Activated CD8-positive, alpha-beta T cell treated with anti-CD3 and anti-CD28 coated beads, Interleukin-2, amount 10 ng/mL, durations not matched to agents 7 days and 5 days (primary cell): ENCODE measurements at regions of chr19 and their contacts with region 1.

Region 1: GRCh38 chr19:4456843-4457653 is 546 bp downstream of the UBXN6 start:
- DNase-seq: peak; percentile 44
- ATAC-seq: peak; percentile 40
- H3K4me3 Mint-ChIP-seq: peak overlapping the region; percentile 85
- H3K27ac Mint-ChIP-seq: peak overlapping the region; percentile 84
- H3K4me1 Mint-ChIP-seq: peaks cover 19% of the 10 kb centered on the region
- H3K27me3 Mint-ChIP-seq: no peaks in the 10 kb centered on the region

Region 2: DNA sequence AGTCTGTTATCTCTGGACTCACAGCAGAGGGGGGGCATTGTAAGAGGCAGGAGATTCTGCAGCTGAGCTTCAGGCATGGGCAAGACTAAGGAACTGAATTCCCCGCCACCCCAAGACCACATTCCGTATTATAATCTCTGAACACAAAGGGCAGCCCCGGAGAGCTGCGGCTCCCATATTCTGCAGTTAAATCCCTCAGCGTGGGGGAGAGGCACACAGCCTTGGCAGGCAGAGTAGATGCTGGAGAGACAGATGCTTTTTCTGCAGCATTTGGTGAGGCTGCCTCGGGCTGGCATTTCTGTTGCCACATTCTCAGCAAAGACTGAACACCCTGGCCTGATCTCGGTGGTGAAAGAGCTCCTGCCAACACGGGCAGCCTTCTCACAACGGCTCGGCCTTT is 41.7 kb before region 1 on chr19:
- CTCF ChIA-PET with region 1: no interaction called
- POLR2A ChIA-PET with region 1: no interaction called
- DNase-seq: no peak
- ATAC-seq: no peak
- H3K4me3 Mint-ChIP-seq: no peak overlapping the region
- H3K27ac Mint-ChIP-seq: no peak overlapping the region
- H3K4me1 Mint-ChIP-seq: peaks cover 3% of the 10 kb centered on the region
- H3K27me3 Mint-ChIP-seq: no peaks in the 10 kb centered on the region

Region 3: DNA sequence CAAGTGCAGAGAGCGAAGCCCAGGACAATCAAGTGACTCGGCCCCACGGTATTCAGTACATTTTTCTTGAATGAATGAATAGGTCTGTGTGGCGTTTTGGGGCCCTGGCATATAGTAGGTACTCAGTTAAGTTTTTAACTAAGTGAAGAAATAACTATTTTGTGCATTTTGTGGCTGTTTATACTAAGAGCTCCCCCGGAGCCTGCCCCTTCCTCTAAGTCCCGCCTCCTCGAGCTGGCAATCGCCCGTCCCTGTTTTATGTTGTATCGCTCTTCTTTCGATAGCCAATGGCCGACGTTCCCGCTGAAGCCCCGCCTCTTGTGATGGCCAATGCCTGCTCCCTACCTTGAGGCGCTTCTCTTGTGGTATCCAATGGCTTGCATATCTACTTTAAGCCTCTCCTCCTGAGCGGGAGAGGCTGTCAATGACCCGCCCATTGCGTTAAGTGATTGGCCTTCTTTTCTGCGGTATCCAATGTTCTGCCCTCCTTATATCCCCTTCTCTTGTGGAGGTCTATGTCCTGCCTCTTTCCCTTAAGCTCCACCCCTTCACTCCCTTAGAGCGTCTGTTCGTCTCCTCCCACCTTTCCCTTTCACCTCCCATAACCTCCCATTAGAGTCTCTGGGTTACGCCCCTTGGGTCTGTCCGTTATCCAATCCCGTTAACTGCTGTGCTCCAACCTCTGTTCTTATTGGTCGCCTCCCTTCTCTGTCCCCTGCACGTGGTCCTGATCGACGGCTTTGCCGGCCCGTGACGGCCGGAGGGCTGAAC is 14.5 kb after region 1 on chr19:
- CTCF ChIA-PET with region 1: interaction called, 4 read pairs
- POLR2A ChIA-PET with region 1: interaction called, 15 read pairs
- DNase-seq: peak; percentile 99
- ATAC-seq: peak; percentile 93
- H3K4me3 Mint-ChIP-seq: no peak overlapping the region
- H3K27ac Mint-ChIP-seq: no peak overlapping the region
- H3K4me1 Mint-ChIP-seq: peaks cover 29% of the 10 kb centered on the region
- H3K27me3 Mint-ChIP-seq: no peaks in the 10 kb centered on the region

Region 4: GRCh38 chr19:4510435-4511194 is 53.6 kb after region 1 on chr19:
- CTCF ChIA-PET with region 1: no interaction called
- POLR2A ChIA-PET with region 1: no interaction called
- DNase-seq: no peak
- ATAC-seq: no peak
- H3K4me3 Mint-ChIP-seq: no peak overlapping the region
- H3K27ac Mint-ChIP-seq: no peak overlapping the region
- H3K4me1 Mint-ChIP-seq: peaks cover 9% of the 10 kb centered on the region
- H3K27me3 Mint-ChIP-seq: no peaks in the 10 kb centered on the region

Region 5: DNA sequence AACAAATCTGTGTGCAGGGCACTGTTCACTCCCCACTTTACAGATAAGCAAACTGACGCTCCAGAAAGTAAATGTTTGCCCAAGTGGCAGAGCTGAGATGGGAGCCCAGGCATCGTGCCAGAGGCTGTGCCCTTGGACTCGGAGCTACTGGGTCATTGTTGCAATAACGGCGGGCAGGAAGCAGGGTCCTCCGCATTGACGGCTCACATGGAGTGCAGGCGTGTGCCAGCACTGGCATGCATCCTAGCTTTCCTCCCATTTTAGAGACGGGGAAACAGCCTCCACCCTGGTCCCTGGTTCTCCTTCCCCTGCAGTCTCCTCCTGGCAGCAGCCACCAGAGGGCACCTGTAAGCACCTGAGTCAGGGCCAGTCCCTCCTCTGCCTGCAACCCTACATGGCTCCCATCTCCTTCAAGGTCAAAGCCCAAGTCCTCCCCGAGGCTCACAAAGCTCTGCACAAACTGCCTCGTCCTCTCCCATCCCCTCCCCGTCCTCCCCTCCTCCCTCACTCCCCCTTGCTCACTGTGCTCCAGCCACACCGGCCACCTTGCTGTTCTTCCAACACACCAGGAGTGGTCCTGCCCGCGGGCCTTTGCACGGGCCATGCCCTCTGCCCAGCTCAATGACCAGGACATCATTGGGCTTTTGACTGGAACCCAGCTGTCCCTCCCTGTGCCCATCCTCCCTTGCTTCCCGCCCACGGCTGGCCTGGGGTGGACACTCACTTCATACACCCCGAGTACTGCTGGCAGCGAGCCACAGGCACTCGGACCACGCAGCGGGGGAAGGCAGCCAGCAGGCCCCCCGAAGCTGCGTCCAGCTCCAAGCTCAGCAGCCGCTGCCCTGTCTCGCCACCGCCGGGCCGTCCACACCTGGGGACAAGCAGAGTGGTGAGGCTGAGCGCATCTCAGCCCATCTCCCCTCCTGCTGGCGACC is 90.5 kb after region 1 on chr19:
- CTCF ChIA-PET with region 1: no interaction called
- POLR2A ChIA-PET with region 1: no interaction called
- DNase-seq: peak; percentile 38
- ATAC-seq: no peak
- H3K4me3 Mint-ChIP-seq: no peak overlapping the region
- H3K27ac Mint-ChIP-seq: no peak overlapping the region
- H3K4me1 Mint-ChIP-seq: no peaks in the 10 kb centered on the region
- H3K27me3 Mint-ChIP-seq: no peaks in the 10 kb centered on the region